ENCODE measurements at regions of chr11 and their contacts with region 1.

Region 1: DNA sequence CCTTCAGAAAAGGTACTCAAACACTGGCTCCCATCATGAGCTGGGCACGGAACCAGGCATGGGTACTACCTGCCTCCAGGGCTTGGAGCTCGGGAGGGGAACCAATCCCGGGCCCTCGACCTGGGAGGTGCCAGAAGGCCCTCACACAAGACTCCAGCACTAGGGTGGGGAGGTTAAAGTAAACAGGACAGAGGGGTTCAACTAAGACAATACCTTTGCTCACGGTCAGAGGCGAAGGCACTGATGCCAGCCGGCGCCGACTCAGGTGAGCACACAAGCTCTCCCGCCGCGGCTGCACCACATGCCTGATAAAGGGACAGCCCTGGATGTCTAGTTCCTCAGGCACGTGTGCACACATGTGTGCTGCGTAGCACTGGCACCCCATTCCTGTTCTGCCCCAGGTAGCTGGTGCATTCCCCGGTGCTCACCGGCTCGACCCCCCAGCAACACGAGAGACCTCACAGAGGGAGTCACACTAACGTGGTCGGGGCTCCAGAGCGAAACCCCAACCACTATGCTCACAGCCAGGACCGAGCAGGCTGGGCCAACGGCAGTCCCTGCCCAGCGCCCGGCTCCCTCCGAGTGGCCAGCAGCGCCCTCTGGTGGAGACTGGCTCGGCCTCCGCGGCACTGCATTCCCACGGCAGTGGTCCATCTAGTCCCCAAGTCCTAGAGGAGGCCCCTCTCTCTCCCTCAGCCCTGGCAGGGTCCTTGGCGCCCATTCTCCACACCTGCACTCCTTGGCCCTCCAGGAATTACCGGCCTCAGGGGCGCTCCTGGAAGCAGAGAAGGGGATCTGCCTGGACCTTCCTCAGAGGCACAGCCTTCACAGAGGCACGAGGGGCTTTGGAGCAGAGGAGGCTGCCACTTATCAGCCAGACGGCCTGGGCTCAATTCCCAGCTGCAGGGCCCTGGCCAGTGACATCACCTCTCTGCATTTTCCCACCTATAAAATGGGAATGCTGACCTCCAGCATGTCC is 28.8 kb upstream of the MOB2 start:
- DNase-seq: peak; percentile 37 to 52 (median 44)
- H3K4me3 ChIP-seq: no peak overlapping the region
- H3K4me3 Mint-ChIP-seq: no peak overlapping the region
- H3K27ac ChIP-seq: no peak overlapping the region
- H3K27ac Mint-ChIP-seq: no peak overlapping the region
- H3K4me1 ChIP-seq: no peaks in the 10 kb centered on the region
- H3K4me1 Mint-ChIP-seq: peaks cover 15% of the 10 kb centered on the region
- H3K27me3 ChIP-seq: no peaks in the 10 kb centered on the region
- H3K27me3 Mint-ChIP-seq: no peaks in the 10 kb centered on the region
- CTCF ChIP-seq: peak; percentile 95

Region 2: DNA sequence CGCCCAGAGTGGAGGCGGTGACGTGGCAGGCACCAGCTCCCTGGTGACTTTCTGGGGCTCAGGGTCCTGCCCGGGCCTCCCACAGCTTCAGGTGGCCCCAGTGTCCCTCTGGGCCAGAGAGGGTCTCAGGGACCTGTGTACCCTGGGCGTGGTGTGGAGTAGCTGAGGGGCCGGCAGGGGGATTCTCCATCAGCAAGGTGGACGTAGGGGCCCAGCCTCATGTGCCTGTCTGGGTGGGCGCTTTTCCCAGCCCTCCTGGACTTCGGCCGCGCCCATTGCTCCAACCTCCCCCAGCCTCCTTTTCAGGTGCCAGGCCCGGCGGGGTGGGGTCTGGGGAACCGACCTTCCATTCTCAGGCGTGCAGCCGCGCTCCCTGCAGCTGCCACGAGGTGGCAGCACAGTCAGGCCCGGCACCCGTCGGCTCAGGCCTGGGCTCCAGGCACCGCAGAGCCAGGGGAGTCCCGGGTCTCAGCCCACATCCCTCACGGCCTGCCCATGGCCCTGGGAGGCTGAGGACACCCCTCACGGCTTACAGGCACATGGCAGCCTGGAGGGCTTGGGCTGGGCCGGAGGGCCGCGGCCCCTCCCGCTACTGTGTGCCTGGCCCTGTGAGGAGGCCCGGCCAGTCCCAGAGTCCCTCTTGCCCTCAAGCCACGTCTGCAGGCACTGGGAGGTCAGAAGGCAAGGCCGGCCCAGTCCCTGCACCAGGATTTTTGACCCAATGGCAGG is 312.4 kb before region 1 on chr11:
- intact Hi-C with region 1: loop called in 1 of 2 experiments (anchors 2 kb)
- DNase-seq: peak; percentile 20 to 45 (median 36)
- H3K4me3 ChIP-seq: no peak overlapping the region
- H3K4me3 Mint-ChIP-seq: no peak overlapping the region
- H3K27ac ChIP-seq: no peak overlapping the region
- H3K27ac Mint-ChIP-seq: no peak overlapping the region
- H3K4me1 ChIP-seq: no peaks in the 10 kb centered on the region
- H3K4me1 Mint-ChIP-seq: no peaks in the 10 kb centered on the region
- H3K27me3 ChIP-seq: no peaks in the 10 kb centered on the region
- H3K27me3 Mint-ChIP-seq: peaks cover 2 to 4% (median 3%) of the 10 kb centered on the region in 3 donors
- CTCF ChIP-seq: peak; percentile 94

Region 3: DNA sequence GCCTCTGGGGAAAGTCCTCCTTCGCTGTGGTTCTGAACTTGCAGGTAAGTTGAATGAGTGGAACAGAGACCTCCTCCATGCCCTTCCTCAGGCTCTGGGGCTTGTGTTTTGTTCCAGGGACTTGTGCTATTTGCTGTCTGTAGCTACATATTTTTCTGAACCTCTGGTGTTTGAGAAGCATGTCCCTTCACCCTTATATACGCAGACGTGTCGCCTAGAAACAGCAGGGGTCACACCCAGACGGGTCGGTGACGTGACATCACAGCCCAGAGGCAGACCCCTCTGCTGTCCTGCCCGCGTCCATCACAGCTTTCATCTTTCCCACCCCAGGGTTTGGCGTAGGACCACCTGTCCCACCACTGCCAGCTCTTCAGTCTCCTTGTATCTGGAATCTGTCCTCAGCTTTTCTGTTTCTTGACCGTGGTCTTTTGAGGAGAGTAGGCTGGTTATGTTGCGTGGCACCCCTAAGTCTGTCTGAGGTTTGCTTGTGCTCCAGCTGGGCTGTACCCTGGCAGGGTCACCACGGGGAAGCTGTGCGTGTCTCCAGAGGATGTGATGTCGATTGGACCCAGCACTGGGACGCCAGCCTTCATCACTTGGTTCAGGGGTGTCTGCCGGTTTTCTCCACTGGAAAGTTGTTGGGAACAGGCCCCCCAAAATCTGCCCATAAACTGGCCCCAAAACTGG is 305.9 kb before region 1 on chr11:
- intact Hi-C with region 1: loop called in 1 of 2 experiments (anchors 5 kb)
- DNase-seq: no peak
- H3K4me3 ChIP-seq: no peak overlapping the region
- H3K4me3 Mint-ChIP-seq: no peak overlapping the region
- H3K27ac ChIP-seq: no peak overlapping the region
- H3K27ac Mint-ChIP-seq: peak overlapping the region in 1 of 7 donors; percentile 28
- H3K4me1 ChIP-seq: no peaks in the 10 kb centered on the region
- H3K4me1 Mint-ChIP-seq: no peaks in the 10 kb centered on the region
- H3K27me3 ChIP-seq: no peaks in the 10 kb centered on the region
- H3K27me3 Mint-ChIP-seq: peaks cover 3 to 24% (median 10%) of the 10 kb centered on the region in 3 donors
- CTCF ChIP-seq: no peak

Region 4: GRCh38 chr11:1293631-1294030 is 221.7 kb before region 1 on chr11:
- intact Hi-C with region 1: loop called (anchors 5 kb)
- DNase-seq: peak in 2 of 3 donors; percentile 21 to 23
- H3K4me3 ChIP-seq: no peak overlapping the region
- H3K4me3 Mint-ChIP-seq: no peak overlapping the region
- H3K27ac ChIP-seq: no peak overlapping the region
- H3K27ac Mint-ChIP-seq: peak overlapping the region in 1 of 7 donors; percentile 40
- H3K4me1 ChIP-seq: peaks cover 1 to 7% of the 10 kb centered on the region in 2 donors
- H3K4me1 Mint-ChIP-seq: peaks cover 8% of the 10 kb centered on the region
- H3K27me3 ChIP-seq: no peaks in the 10 kb centered on the region
- H3K27me3 Mint-ChIP-seq: no peaks in the 10 kb centered on the region
- CTCF ChIP-seq: peak; percentile 50

Region 5: GRCh38 chr11:1298695-1299492 is 216.5 kb before region 1 on chr11:
- intact Hi-C with region 1: loop called (anchors 5 kb)
- DNase-seq: peak; percentile 71 to 79 (median 72)
- H3K4me3 ChIP-seq: peak overlapping the region in 1 of 3 experiments; percentile 2
- H3K4me3 Mint-ChIP-seq: peak overlapping the region in 1 of 2 donors; percentile 69
- H3K27ac ChIP-seq: peak overlapping the region in 1 of 2 donors; percentile 55
- H3K27ac Mint-ChIP-seq: peak overlapping the region; percentile 40 to 84 (median 79)
- H3K4me1 ChIP-seq: peaks cover 20 to 48% of the 10 kb centered on the region in 2 donors
- H3K4me1 Mint-ChIP-seq: peaks cover 54% of the 10 kb centered on the region
- H3K27me3 ChIP-seq: no peaks in the 10 kb centered on the region
- H3K27me3 Mint-ChIP-seq: no peaks in the 10 kb centered on the region
- CTCF ChIP-seq: no peak